RWPE1 (cell line): ENCODE measurements at regions of chr5 and their contacts with region 1.

Region 1: DNA sequence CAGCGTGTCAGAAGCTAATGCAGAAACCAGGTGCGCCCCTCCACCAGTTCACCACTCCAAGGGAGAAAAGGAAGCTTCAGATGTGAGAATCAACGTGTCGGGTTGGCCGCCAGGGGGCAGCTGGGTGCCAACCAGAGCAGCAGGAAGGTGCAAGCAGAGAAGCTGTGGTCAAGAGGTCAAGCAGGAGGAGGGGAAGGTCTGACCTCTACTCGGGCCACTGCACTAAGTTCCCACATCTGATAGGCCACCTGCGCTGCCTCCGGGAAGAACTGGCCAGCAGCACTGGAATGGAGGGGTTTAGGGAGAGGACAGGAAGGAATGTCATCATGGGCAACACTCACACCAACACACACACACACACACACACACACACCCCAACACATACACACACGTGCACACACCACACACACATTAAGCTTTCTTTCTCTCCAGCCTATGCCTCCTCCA is 31.4 kb downstream of the ANXA6 start:
- DNase-seq: peak; percentile 75
- H3K27ac ChIP-seq: no peak overlapping the region
- CTCF ChIP-seq: peak; percentile 86

Region 2: DNA sequence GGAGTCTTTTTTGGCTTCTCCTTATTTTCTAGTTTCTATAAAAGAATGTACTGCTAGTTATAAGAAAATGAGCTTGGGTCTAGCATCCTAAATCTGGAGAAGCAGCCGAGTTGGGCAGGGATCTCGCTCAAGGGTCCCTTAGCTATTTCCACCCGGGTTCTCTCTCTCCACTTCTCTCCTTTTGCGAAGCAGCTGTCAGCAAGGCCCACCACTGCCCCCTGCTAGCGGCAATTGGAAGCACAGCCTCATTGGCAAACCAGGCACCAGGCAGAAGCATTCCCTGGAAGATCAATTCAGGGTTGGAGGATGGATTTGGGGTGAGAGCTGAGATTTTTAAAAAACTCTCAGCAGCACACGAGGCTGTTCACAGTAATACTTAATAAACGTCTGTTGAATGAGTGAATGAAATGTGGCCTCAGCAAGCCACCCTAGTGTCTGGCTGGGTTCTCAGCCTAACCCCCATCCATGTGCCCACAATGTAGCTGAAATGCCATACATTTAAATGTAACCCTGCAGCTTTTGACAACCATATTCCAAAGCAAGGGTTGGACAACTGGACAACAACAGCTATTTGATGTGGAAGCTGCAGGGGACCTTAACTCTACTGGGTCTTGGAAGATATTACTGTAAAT is 10.8 kb before region 1 on chr5:
- CTCF ChIA-PET with region 1: interaction called, 20 read pairs
- POLR2A ChIA-PET with region 1: no interaction called
- DNase-seq: peak; percentile 87
- H3K27ac ChIP-seq: no peak overlapping the region
- CTCF ChIP-seq: peak; percentile 98

Region 3: DNA sequence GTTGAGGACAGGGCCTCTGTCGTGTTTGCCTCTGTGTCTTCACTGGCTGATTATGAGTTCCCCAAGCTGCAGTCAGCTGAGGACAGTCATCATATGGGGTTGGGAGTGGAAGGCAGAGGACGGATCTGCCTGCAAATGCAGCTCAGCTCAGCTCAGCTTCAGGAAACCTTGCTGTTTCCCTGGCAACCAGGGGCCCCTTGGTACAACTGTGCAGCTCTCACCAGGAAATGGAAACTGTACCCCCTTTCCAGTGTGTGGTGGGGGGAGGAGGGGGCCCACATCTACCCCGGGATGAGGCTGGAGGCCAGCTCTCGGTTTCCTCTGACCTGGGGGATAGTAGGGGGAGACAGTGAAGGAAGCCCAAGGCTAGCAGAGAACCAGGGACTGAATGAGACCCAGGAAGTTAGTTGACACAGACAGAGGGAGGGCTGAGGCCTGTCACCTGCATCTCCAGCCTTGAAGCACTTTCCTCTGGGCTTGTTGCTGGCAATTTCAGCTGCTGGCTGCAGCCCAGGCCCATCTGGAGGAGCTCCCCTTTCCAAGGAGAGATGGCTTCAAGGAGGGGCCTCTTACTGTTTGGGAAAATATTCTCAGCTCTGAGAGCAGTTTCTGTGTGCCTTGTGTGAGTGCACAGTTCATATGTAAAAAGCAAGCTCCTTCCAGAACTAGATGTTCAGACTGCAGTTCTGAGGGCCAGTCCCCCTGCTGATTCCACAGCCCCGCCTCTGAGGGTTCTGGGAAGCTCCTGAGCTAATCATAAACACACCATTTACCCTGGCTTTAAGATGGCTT is 24.4 kb after region 1 on chr5:
- CTCF ChIA-PET with region 1: interaction called, 13 read pairs
- POLR2A ChIA-PET with region 1: no interaction called
- DNase-seq: no peak
- H3K27ac ChIP-seq: peak overlapping the region; percentile 1; the same call in 1 of the 2 replicates
- CTCF ChIP-seq: no peak

Region 4: GRCh38 chr5:151239237-151239861 is 113.1 kb after region 1 on chr5:
- CTCF ChIA-PET with region 1: interaction called, 33 read pairs
- POLR2A ChIA-PET with region 1: no interaction called
- DNase-seq: peak; percentile 82
- H3K27ac ChIP-seq: no peak overlapping the region
- CTCF ChIP-seq: peak; percentile 93

Region 5: DNA sequence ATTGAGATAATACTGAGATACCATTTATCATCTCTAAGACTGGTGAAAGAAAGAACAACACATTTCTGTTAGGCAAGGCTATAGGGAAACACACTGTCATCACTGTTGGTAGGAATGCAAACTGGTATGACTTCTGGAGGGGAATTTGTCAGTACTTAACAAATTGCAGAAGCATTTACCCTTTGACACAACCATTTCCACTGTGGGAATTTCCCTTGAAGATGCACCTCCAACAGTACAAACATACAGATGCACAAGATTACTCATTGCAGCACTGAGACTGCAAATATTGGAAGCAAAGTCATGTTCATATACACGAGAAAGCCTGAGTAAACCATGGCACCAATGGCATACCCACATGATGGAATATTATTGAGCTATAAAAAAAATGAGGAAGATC is 144.4 kb after region 1 on chr5:
- CTCF ChIA-PET with region 1: no interaction called
- POLR2A ChIA-PET with region 1: no interaction called
- DNase-seq: no peak
- H3K27ac ChIP-seq: no peak overlapping the region
- CTCF ChIP-seq: no peak